ENCODE measurements at regions of chr2 and their contacts with region 1.

Region 1: GRCh38 chr2:55617175-55618024 is at the start of gene PPP4R3B:
- DNase-seq: peak; percentile 99
- ATAC-seq: peak; percentile 87
- H3K4me3 Mint-ChIP-seq: no peak within 1 kb of the TSS
- H3K27ac Mint-ChIP-seq: no peak within 1 kb of the TSS
- H3K4me1 Mint-ChIP-seq: peaks cover 27% of the 10 kb centered on the region
- H3K27me3 Mint-ChIP-seq: no peaks in the 10 kb centered on the region
- total RNA-seq, gene PPP4R3B: 67.5 to 74.1 TPM

Region 2: GRCh38 chr2:53767405-53768241 is 1849.8 kb before region 1 on chr2 and contains the start of gene CHAC2:
- CTCF ChIA-PET with region 1: interaction called, 3 read pairs
- POLR2A ChIA-PET with region 1: no interaction called
- intact Hi-C with region 1: loop called in 1 of 2 experiments (anchors 5 kb)
- DNase-seq: peak; percentile 94
- ATAC-seq: peak; percentile 96
- H3K4me3 Mint-ChIP-seq: peak within 1 kb of the TSS; percentile 91
- H3K27ac Mint-ChIP-seq: peak within 1 kb of the TSS; percentile 96
- H3K4me1 Mint-ChIP-seq: peaks cover 26% of the 10 kb centered on the region
- H3K27me3 Mint-ChIP-seq: no peaks in the 10 kb centered on the region
- total RNA-seq, gene CHAC2: 15.8 to 17.4 TPM

Region 3: DNA sequence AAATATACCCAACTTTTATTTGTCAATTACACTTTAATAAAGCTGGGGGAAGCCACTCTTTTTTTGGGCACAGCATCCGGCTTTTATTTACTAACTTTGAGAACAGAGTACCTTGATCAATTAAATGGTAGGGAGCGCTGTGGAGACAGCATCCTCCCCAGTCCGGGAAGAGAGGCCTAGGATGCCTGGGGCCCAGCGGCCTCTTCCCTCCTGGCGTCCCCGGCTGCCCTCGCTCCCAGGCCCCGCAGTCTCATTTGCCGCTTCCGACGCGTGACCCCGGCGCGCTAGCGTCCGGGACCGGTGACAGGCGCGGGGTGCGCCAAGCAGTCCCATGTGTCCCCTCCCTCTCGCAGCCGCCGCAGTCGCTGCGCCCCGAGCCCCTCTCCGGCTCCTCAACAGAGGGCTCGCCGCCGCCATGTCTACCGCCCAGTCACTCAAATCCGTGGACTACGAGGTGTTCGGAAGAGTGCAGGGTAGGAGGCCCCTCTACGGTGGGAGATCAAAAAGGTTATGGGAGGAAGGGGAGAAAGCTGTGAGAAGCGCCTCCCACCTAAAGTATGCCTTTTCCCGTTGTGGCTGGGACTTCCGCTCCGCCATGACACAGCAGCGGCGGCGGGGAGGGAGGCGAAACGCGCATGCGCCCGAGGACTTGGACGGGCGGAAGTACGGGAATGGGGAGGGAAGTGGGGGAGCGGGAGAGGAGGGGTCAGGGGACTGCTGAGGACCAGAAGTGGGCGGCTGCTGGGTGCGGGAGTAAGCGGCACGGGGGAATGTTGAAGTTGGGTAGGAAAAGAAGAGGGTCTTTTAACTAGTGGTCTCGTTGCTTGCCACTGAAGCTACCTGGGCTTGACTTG is 1501.9 kb before region 1 on chr2 and contains the start of gene ACYP2:
- CTCF ChIA-PET with region 1: no interaction called
- POLR2A ChIA-PET with region 1: no interaction called
- intact Hi-C with region 1: loop called in 1 of 2 experiments (anchors 1 kb)
- DNase-seq: peak; percentile 95
- ATAC-seq: peak; percentile 90
- H3K4me3 Mint-ChIP-seq: peak within 1 kb of the TSS; percentile 85
- H3K27ac Mint-ChIP-seq: peak within 1 kb of the TSS; percentile 96
- H3K4me1 Mint-ChIP-seq: peaks cover 12% of the 10 kb centered on the region
- H3K27me3 Mint-ChIP-seq: peaks cover 2% of the 10 kb centered on the region
- total RNA-seq, gene ACYP2: 6.0 to 6.9 TPM

Region 4: GRCh38 chr2:55232084-55232862 is 385.1 kb before region 1 on chr2 and contains the starts of genes CLHC1 and RPS27A:
- CTCF ChIA-PET with region 1: no interaction called
- POLR2A ChIA-PET with region 1: no interaction called
- intact Hi-C with region 1: loop called (anchors 1 kb)
- DNase-seq: peak; percentile 95
- ATAC-seq: peak; percentile 90
- H3K4me3 Mint-ChIP-seq: peak within 1 kb of the TSS; percentile 98
- H3K27ac Mint-ChIP-seq: peak within 1 kb of the TSS; percentile 98
- H3K4me1 Mint-ChIP-seq: peaks cover 60% of the 10 kb centered on the region
- H3K27me3 Mint-ChIP-seq: no peaks in the 10 kb centered on the region
- total RNA-seq, gene CLHC1: 4.0 to 6.1 TPM
- total RNA-seq, gene RPS27A: 674 to 1,461 TPM

Region 5: DNA sequence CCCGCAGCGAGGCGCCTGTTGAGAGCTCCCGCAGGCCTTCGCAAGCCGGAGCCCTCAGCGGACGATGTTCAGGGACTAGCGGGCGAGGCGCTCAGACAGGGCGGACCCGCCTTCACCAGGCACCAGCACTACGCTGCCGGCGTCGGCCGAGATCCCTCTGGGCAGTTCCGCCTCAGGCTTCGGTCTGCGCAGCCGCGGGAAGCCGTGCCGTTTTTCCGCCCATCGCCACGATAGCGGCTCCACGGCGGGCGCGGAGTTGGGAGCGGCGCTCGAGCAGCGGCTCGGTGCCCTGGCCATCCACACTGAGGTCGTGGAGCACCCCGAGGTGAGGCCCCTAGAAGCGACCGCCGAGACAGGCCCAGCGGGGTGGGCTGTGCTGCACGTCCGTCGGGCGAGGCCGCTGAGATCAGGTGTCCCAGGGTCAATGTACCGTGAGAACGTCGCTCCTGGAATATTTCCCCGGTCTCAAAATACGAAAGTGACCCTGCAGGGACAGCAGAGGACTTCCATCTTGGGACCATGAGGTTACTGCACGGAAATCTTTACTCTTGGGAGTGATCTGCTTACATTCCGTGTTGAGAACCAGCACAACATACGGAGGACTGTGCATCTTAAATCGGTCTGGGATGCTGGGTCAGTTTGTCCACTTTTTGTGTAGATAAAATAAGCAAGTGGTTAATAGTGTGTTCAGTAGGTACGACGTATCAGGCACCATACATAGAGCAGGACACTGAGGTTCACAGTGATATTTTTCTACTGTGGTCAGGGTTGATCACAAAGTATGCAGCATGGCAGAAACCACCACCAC is 335.1 kb before region 1 on chr2:
- CTCF ChIA-PET with region 1: no interaction called
- POLR2A ChIA-PET with region 1: no interaction called
- intact Hi-C with region 1: loop called in 1 of 2 experiments (anchors 5 kb)
- DNase-seq: peak; percentile 91
- ATAC-seq: peak; percentile 99
- H3K4me3 Mint-ChIP-seq: peak overlapping the region; percentile 86
- H3K27ac Mint-ChIP-seq: peak overlapping the region; percentile 94
- H3K4me1 Mint-ChIP-seq: peaks cover 14% of the 10 kb centered on the region
- H3K27me3 Mint-ChIP-seq: no peaks in the 10 kb centered on the region

Region 6: GRCh38 chr2:55519938-55520885 is 97.2 kb before region 1 on chr2:
- CTCF ChIA-PET with region 1: no interaction called
- POLR2A ChIA-PET with region 1: interaction called, 15 read pairs
- intact Hi-C with region 1: loop called (anchors 1 kb)
- DNase-seq: peak; percentile 52
- ATAC-seq: peak; percentile 25
- H3K4me3 Mint-ChIP-seq: peak overlapping the region; percentile 99
- H3K27ac Mint-ChIP-seq: peak overlapping the region; percentile 90
- H3K4me1 Mint-ChIP-seq: peaks cover 8% of the 10 kb centered on the region
- H3K27me3 Mint-ChIP-seq: no peaks in the 10 kb centered on the region

Region 7: GRCh38 chr2:55590810-55591440 is 26.5 kb before region 1 on chr2:
- CTCF ChIA-PET with region 1: no interaction called
- POLR2A ChIA-PET with region 1: no interaction called
- intact Hi-C with region 1: loop called (anchors 1 to 2 kb)
- DNase-seq: no peak
- ATAC-seq: peak; percentile 99
- H3K4me3 Mint-ChIP-seq: no peak overlapping the region
- H3K27ac Mint-ChIP-seq: peak overlapping the region; percentile 67
- H3K4me1 Mint-ChIP-seq: peaks cover 38% of the 10 kb centered on the region
- H3K27me3 Mint-ChIP-seq: no peaks in the 10 kb centered on the region

Region 8: DNA sequence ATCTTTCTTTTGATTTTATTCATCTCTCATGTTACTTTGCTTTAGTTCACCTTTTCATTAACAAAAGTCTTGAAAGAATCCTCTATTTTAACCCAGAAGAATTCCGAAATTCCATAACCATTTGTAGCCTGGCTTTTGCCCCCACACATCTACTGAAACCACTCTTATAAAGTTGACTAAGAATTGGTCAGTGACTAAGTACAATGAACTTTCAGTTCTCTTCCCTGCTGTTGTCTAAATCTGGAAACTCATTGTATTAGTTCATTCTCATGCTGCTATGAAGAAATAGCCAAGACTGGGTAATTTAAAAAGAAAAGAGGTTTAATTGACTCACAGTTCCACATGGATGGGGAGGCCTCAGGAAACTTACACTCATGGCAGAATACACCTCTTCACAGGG is 126.2 kb after region 1 on chr2:
- CTCF ChIA-PET with region 1: no interaction called
- POLR2A ChIA-PET with region 1: no interaction called
- intact Hi-C with region 1: no loop called
- DNase-seq: no peak
- ATAC-seq: no peak
- H3K4me3 Mint-ChIP-seq: no peak overlapping the region
- H3K27ac Mint-ChIP-seq: no peak overlapping the region
- H3K4me1 Mint-ChIP-seq: no peaks in the 10 kb centered on the region
- H3K27me3 Mint-ChIP-seq: peaks cover 23% of the 10 kb centered on the region

Region 9: GRCh38 chr2:56288838-56289580 is 671.6 kb after region 1 on chr2:
- CTCF ChIA-PET with region 1: no interaction called
- POLR2A ChIA-PET with region 1: no interaction called
- intact Hi-C with region 1: no loop called
- DNase-seq: no peak
- ATAC-seq: no peak
- H3K4me3 Mint-ChIP-seq: no peak overlapping the region
- H3K27ac Mint-ChIP-seq: no peak overlapping the region
- H3K4me1 Mint-ChIP-seq: no peaks in the 10 kb centered on the region
- H3K27me3 Mint-ChIP-seq: no peaks in the 10 kb centered on the region

Measured in activated CD4-positive, alpha-beta T cell treated with anti-CD3 and anti-CD28 coated beads for 36 hours (primary cell).